Activated B cell treated with CpG ODN at 0.5 μM for 24 hours (primary cell): ENCODE measurements at regions of chr16 and their contacts with region 1.

Region 1: GRCh38 chr16:85650966-85651811 is 37.6 kb downstream of the GINS2 start:
- DNase-seq: no peak
- ATAC-seq: no peak
- H3K4me3 Mint-ChIP-seq: no peak overlapping the region
- H3K27ac Mint-ChIP-seq: no peak overlapping the region
- H3K4me1 Mint-ChIP-seq: peaks cover 6% of the 10 kb centered on the region
- H3K27me3 Mint-ChIP-seq: no peaks in the 10 kb centered on the region
- CTCF ChIP-seq: no peak

Region 2: DNA sequence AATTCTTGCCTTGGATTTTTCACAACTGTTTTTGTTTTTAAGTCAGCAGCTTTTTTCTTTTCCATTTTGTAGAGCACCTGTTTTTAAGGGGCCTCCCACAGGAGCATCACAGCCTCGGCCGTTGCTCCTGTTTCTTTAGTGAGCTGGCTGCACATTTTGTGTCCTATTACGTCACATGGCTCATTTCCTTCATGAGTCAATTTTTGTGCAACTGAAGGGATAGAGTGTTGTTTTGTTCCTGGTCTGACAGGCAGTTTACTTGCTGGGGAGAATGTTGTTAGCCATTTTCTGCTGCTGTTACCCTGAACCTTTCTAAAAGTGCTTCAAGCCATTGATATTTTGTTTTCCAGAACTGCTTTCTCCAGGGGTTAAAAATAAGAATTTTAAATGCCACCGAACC is 876.4 kb before region 1 on chr16:
- CTCF ChIA-PET with region 1: no interaction called
- POLR2A ChIA-PET with region 1: no interaction called
- intact Hi-C with region 1: no loop called
- DNase-seq: no peak
- ATAC-seq: no peak
- H3K4me3 Mint-ChIP-seq: no peak overlapping the region
- H3K27ac Mint-ChIP-seq: no peak overlapping the region
- H3K4me1 Mint-ChIP-seq: no peaks in the 10 kb centered on the region
- H3K27me3 Mint-ChIP-seq: no peaks in the 10 kb centered on the region
- CTCF ChIP-seq: no peak

Region 3: DNA sequence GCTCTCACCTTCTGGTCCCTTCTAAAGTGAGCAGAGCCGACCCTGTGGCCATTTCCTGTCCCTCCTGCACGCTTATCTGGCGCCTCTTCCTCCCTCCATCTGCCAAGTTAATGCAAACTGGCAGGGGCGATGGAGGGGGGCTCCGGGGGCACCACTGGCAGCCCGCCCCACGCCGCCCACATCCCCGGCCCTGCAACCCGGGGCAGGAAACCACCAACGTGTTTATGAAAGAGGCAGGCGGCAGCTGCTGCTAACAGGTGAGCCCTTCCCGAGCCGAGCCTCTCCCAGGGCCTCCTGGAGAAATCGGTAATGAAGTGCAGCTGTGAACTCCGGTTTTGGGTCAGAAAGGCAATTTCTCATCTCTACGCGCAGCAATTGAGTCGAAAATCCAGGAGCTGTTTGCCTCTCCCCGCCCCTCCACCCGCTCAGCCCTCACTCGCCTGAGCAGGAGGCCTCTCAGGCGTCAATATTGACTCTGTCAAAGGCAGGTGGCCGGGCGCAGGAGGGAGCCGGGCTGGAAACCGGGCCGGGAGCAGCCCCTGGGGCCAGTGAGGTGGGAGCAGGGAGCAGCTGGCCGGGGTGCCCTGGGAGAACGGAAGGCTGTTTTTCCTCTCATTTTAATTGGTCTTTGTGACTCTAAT is 202.5 kb before region 1 on chr16:
- CTCF ChIA-PET with region 1: no interaction called
- POLR2A ChIA-PET with region 1: interaction called, 10 read pairs
- intact Hi-C with region 1: no loop called
- DNase-seq: peak; percentile 27
- ATAC-seq: no peak
- H3K4me3 Mint-ChIP-seq: peak overlapping the region; percentile 48
- H3K27ac Mint-ChIP-seq: no peak overlapping the region
- H3K4me1 Mint-ChIP-seq: peaks cover 25% of the 10 kb centered on the region
- H3K27me3 Mint-ChIP-seq: peaks cover 11% of the 10 kb centered on the region
- CTCF ChIP-seq: no peak